MCF 10A (cell line): ENCODE measurements at regions of chr3 and their contacts with region 1.

Region 1: GRCh38 chr3:39559543-39559942 is 92.1 kb downstream of the MOBP start:
- DNase-seq: no peak
- H3K4me3 Mint-ChIP-seq: no peak overlapping the region
- H3K27ac Mint-ChIP-seq: no peak overlapping the region
- H3K4me1 Mint-ChIP-seq: no peaks in the 10 kb centered on the region
- H3K27me3 Mint-ChIP-seq: no peaks in the 10 kb centered on the region
- CTCF ChIP-seq: no peak

Region 2: DNA sequence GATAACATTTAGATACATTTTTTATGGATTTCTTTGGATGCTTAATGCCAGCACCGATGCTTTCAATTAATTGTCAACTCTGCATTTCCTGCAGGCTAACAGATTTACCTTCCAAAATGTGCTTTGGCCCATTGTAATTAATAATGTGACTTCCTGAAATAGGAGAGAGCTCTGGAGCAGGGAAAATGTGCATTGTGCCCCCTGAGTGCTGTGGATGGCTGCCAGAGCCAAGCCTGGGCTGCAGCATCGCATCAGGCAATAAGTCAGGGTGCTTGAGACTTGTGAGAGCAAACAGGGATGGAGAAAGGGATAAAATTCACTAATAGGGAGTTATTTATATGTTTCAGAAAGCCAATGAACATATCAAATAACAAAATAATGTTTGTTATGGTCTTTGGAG is 41.7 kb after region 1 on chr3:
- CTCF ChIA-PET with region 1: no interaction called
- POLR2A ChIA-PET with region 1: no interaction called
- intact Hi-C with region 1: loop called (anchors 2 kb)
- DNase-seq: no peak
- H3K4me3 Mint-ChIP-seq: no peak overlapping the region
- H3K27ac Mint-ChIP-seq: no peak overlapping the region
- H3K4me1 Mint-ChIP-seq: no peaks in the 10 kb centered on the region
- H3K27me3 Mint-ChIP-seq: no peaks in the 10 kb centered on the region
- CTCF ChIP-seq: no peak

Region 3: GRCh38 chr3:39779511-39780230 is 220.1 kb after region 1 on chr3:
- CTCF ChIA-PET with region 1: no interaction called
- POLR2A ChIA-PET with region 1: no interaction called
- intact Hi-C with region 1: no loop called
- DNase-seq: no peak
- H3K4me3 Mint-ChIP-seq: no peak overlapping the region
- H3K27ac Mint-ChIP-seq: no peak overlapping the region
- H3K4me1 Mint-ChIP-seq: no peaks in the 10 kb centered on the region
- H3K27me3 Mint-ChIP-seq: no peaks in the 10 kb centered on the region
- CTCF ChIP-seq: no peak